Psoas muscle (tissue), 8 donors: ENCODE measurements at regions of chr3 and their contacts with region 1.

Region 1: GRCh38 chr3:45760878-45761711 is 35.2 kb downstream of the SLC6A20 start:
- DNase-seq: peak in 1 of 2 donors; percentile 80
- ATAC-seq: peak; percentile 90 to 99 (median 95)
- H3K4me3 ChIP-seq: no peak overlapping the region
- H3K27ac ChIP-seq: no peak overlapping the region
- H3K4me1 ChIP-seq: no peaks in the 10 kb centered on the region
- H3K27me3 ChIP-seq: no peaks in the 10 kb centered on the region
- CTCF ChIP-seq: peak; percentile 69

Region 2: GRCh38 chr3:45776611-45777010 is 15.5 kb after region 1 on chr3:
- intact Hi-C with region 1: no loop called
- DNase-seq: no peak
- ATAC-seq: no peak
- H3K4me3 ChIP-seq: no peak overlapping the region
- H3K27ac ChIP-seq: no peak overlapping the region
- H3K4me1 ChIP-seq: no peaks in the 10 kb centered on the region
- H3K27me3 ChIP-seq: no peaks in the 10 kb centered on the region
- CTCF ChIP-seq: no peak

Region 3: DNA sequence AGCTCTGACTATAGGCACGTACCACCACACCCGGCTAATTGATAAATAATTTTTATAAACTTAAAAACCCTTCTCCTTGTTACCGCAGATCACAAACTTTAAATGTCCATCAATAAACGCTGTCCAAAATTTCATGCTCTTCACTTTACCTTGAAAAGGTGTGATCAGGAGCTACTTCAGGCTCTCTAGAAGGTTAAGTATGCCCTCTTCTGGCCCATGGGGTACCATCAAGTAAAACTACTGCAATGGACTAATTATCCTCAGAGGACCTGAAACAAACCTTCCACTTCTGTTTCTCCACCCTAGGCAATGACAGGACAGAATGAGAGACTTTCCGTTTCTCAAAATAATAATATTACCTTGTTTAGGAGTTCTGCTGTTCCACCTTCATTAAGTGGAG is 71.6 kb after region 1 on chr3:
- intact Hi-C with region 1: loop called (anchors 1 to 2 kb)
- DNase-seq: no peak
- ATAC-seq: peak in 3 of 4 donors; percentile 69 to 86 (median 75)
- H3K4me3 ChIP-seq: no peak overlapping the region
- H3K27ac ChIP-seq: no peak overlapping the region
- H3K4me1 ChIP-seq: no peaks in the 10 kb centered on the region
- H3K27me3 ChIP-seq: no peaks in the 10 kb centered on the region
- CTCF ChIP-seq: peak; percentile 55

Region 4: GRCh38 chr3:45906681-45907407 is 145.7 kb after region 1 on chr3:
- intact Hi-C with region 1: loop called (anchors 5 kb)
- DNase-seq: peak; percentile 43 to 64
- ATAC-seq: peak; percentile 87 to 94 (median 92)
- H3K4me3 ChIP-seq: no peak overlapping the region
- H3K27ac ChIP-seq: peak overlapping the region; percentile 24
- H3K4me1 ChIP-seq: peaks cover 7% of the 10 kb centered on the region
- H3K27me3 ChIP-seq: no peaks in the 10 kb centered on the region
- CTCF ChIP-seq: peak; percentile 34

Region 5: DNA sequence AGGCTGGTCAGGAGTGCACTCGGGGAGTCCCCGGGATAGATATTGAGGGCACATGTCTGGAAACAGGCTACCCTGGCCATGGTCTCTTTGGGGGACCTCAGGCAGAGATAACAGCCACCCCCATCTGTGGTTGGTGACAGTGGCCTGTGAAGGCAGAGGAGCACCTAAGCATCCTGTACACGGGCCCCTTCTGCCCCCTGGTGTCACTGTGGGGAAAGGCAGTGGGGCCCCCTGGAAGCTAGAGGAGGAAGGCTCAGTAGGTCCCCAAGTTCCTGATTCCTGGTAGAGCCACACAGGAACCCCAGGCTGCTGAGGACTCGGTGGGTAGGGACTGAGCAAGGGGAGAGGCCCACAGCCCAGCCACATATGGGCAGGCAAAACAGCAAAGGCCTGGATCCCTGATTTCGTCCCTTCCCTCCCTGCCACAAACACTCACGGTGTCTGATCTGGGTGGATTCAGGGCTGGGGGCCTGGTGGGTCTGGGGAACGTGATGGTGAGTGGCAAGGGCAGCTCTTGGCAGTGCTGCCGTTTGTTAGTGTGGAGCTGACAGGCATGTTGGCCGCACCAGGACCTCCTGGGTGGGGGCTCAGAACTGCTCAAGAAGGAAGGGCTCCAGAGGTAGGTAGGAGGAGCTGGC is 168.1 kb after region 1 on chr3:
- intact Hi-C with region 1: loop called in 1 of 2 experiments (anchors 5 kb)
- DNase-seq: peak in 1 of 2 donors; percentile 4
- ATAC-seq: peak; percentile 28 to 67 (median 65)
- H3K4me3 ChIP-seq: no peak overlapping the region
- H3K27ac ChIP-seq: no peak overlapping the region
- H3K4me1 ChIP-seq: no peaks in the 10 kb centered on the region
- H3K27me3 ChIP-seq: no peaks in the 10 kb centered on the region
- CTCF ChIP-seq: peak; percentile 44

Region 6: DNA sequence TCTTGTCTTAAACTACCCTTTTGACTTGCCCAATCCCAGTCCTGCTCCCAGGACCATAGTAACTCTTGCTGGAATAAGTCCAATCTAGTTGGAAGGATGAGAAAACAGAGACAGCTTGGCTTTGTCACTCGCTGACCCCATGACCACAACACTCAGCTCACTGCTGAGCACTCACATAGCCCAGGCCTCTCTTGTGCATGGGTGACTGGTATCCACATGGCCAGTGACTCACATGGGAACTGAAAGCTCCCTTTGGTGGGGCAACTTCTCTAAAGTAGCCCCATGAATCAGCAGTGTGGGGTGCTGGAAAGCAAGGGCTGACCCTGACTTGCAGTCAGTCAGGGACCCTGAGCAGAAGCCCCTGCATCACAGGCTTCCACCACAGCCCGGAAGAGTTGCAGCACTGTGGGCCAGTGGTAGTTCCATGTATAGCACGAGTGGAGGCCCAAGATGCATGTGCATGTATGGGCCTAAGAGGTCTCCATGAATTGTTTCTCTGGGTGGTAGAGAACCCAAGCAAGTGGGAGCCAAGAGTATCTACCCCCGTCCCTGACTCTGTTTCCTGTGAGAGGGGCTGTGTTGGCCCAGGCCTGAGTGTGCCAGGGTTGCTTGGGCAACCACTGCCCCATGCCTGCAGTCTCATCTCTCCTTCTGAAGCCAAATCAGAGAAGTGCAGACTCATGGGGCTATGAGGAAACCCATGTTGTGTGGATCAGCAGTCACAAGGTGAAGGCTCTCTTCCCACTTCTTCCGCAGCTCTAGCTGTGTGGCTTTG is 328.3 kb after region 1 on chr3:
- intact Hi-C with region 1: loop called in 1 of 2 experiments (anchors 10 kb)
- DNase-seq: peak; percentile 58 to 72
- ATAC-seq: peak; percentile 69 to 79 (median 78)
- H3K4me3 ChIP-seq: no peak overlapping the region
- H3K27ac ChIP-seq: peak overlapping the region; percentile 54
- H3K4me1 ChIP-seq: peaks cover 3% of the 10 kb centered on the region
- H3K27me3 ChIP-seq: no peaks in the 10 kb centered on the region
- CTCF ChIP-seq: no peak